ENCODE measurements at regions of chr1 and their contacts with region 1.

Region 1: DNA sequence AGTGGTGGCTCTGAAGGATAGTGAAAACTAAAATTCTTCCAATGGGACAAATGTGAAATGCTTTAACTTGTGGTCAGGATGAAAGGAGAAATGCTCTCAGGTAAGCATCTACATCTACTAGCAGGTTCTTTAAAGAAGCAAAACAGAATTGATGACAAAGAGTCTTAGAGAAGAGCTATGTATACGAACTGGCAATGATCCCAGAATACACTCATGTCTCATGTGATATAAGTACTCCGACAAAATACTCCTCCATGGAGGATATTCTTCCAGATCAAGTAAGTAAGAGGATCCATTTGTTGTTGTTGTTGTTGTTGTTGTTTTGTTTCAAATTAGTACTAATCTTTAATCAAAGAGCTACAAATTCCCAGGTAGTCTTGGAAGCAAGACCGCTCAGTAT is 174.0 kb upstream of the ATP1B1 start:
- DNase-seq: no peak

Region 2: GRCh38 chr1:168964478-168964877 is 31.9 kb after region 1 on chr1:
- intact Hi-C with region 1: loop called (anchors 2 kb)
- DNase-seq: no peak

Measured in cardiac septum (tissue), 1 donor.